Gastrocnemius medialis (tissue), 4 donors: ENCODE measurements at regions of chr4 and their contacts with region 1.

Region 1: GRCh38 chr4:152039023-152039481 is 278.2 kb upstream of the GATB start:
- DNase-seq: no peak
- ATAC-seq: peak; percentile 69 to 77
- H3K4me3 ChIP-seq: no peak overlapping the region
- H3K27ac ChIP-seq: peak overlapping the region; percentile 58 to 84 (median 80)
- H3K4me1 ChIP-seq: peaks cover 16 to 21% of the 10 kb centered on the region in 2 donors
- H3K27me3 ChIP-seq: no peaks in the 10 kb centered on the region
- CTCF ChIP-seq: no peak
- POLR2A ChIP-seq: peak in 1 of 2 donors; percentile 29

Region 2: GRCh38 chr4:151960449-151961230 is 78.4 kb before region 1 on chr4:
- in situ Hi-C with region 1: no loop called
- intact Hi-C with region 1: loop called (anchors 5 kb)
- DNase-seq: no peak
- ATAC-seq: peak in 1 of 2 donors; percentile 33
- H3K4me3 ChIP-seq: no peak overlapping the region
- H3K27ac ChIP-seq: peak overlapping the region in 1 of 4 donors; percentile 85
- H3K4me1 ChIP-seq: peaks cover 0 to 16% of the 10 kb centered on the region in 2 donors
- H3K27me3 ChIP-seq: no peaks in the 10 kb centered on the region
- CTCF ChIP-seq: no peak
- POLR2A ChIP-seq: no peak

Region 3: DNA sequence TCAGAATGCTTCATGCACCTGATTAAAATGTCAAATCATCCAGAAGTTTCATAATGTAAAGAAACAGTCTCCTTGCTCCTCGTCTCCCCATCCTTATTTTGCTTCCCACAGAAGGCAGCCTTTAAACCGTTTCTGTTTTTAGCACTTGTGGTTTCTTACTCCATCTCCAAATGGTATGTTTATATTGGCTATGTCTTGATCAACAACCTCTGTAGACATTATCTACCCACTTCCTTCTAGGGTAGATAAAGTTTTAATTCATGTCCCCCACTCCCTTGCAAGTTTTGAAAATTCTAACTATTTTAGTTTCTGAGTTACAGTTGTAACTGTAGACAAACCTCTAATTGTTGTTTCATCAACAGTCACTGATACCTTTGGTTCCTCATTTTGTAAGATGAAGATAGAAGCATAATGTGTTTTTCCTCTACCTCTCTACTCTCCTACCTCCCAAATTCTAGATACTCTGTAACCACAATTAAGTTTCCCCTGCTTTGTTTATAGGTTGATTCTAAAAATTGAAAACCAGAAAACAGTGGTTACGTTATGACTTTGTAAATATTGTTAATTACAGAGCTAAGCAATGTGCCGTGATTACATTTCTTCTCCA is 13.5 kb after region 1 on chr4:
- in situ Hi-C with region 1: no loop called
- intact Hi-C with region 1: no loop called
- DNase-seq: no peak
- ATAC-seq: no peak
- H3K4me3 ChIP-seq: no peak overlapping the region
- H3K27ac ChIP-seq: no peak overlapping the region
- H3K4me1 ChIP-seq: no peaks in the 10 kb centered on the region
- H3K27me3 ChIP-seq: no peaks in the 10 kb centered on the region
- CTCF ChIP-seq: no peak
- POLR2A ChIP-seq: no peak

Region 4: DNA sequence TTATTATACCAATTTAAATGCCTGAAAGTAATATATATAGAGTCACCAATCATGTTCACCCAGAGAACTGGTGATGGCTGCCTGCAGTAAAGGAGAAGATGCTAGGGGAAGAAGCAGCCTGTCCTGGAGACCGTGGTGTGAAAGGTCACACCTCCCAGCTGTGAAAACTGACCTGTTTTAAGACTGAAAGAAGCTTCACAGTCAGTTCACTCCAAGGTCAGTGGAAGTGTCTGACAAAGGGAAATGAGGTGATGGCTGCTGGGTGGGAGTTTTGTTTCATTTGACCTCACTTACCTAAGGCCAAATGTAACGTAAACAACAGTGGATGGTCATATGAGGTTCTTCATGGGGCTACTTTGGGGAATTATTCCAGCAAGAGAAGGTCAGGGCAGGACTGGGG is 73.8 kb after region 1 on chr4:
- in situ Hi-C with region 1: no loop called
- intact Hi-C with region 1: loop called (anchors 2 kb)
- DNase-seq: no peak
- ATAC-seq: no peak
- H3K4me3 ChIP-seq: no peak overlapping the region
- H3K27ac ChIP-seq: no peak overlapping the region
- H3K4me1 ChIP-seq: peaks cover 15 to 37% of the 10 kb centered on the region in 2 donors
- H3K27me3 ChIP-seq: no peaks in the 10 kb centered on the region
- CTCF ChIP-seq: no peak
- POLR2A ChIP-seq: no peak